ENCODE measurements at regions of chr20 and their contacts with region 1.

Region 1: GRCh38 chr20:45095753-45096371 is 5.1 kb downstream of the KCNS1 start:
- DNase-seq: peak; percentile 55
- ATAC-seq: peak; percentile 76
- H3K4me3 ChIP-seq: no peak overlapping the region
- H3K27ac ChIP-seq: no peak overlapping the region
- H3K4me1 ChIP-seq: no peaks in the 10 kb centered on the region
- H3K27me3 ChIP-seq: no peaks in the 10 kb centered on the region
- CTCF ChIP-seq: peak; percentile 92

Region 2: GRCh38 chr20:43650997-43651525 is 1444.8 kb before region 1 on chr20:
- CTCF ChIA-PET with region 1: no interaction called
- POLR2A ChIA-PET with region 1: no interaction called
- in situ Hi-C with region 1: no loop called
- intact Hi-C with region 1: no loop called
- DNase-seq: no peak
- ATAC-seq: no peak
- H3K4me3 ChIP-seq: no peak overlapping the region
- H3K27ac ChIP-seq: no peak overlapping the region
- H3K4me1 ChIP-seq: no peaks in the 10 kb centered on the region
- H3K27me3 ChIP-seq: no peaks in the 10 kb centered on the region
- CTCF ChIP-seq: no peak

Region 3: DNA sequence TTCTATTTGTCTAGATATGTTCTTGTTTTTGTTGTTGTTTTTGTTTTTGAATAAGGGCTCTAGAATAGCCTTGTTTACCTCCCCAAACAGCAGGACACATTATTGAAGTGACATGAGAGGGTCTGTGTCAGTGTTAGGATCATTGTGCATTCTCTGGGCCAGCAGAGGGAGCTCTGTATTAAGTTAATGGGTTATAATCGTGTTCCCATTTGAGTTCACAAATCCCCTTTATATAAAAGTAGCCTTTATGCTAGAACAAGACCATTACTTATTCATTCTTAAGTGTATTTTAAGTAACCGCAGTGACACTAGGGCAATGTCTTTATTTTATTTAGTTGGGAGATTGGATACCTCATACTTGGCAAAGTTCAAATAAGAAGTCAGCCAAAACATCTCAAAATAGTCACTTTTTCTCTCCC is 84.7 kb before region 1 on chr20:
- CTCF ChIA-PET with region 1: interaction called, 19 read pairs
- POLR2A ChIA-PET with region 1: no interaction called
- in situ Hi-C with region 1: no loop called
- intact Hi-C with region 1: loop called (anchors 10 kb)
- DNase-seq: peak; percentile 38
- ATAC-seq: peak; percentile 92
- H3K4me3 ChIP-seq: no peak overlapping the region
- H3K27ac ChIP-seq: no peak overlapping the region
- H3K4me1 ChIP-seq: 0 out of 2 replicates have a peak, but pooled peaks cover 3% of the 10 kb centered on the region
- H3K27me3 ChIP-seq: no peaks in the 10 kb centered on the region
- CTCF ChIP-seq: peak; percentile 79; the same call in 1 of the 2 replicates

Region 4: GRCh38 chr20:45044084-45044573 is 51.7 kb before region 1 on chr20:
- CTCF ChIA-PET with region 1: interaction called, 16 read pairs
- POLR2A ChIA-PET with region 1: no interaction called
- in situ Hi-C with region 1: no loop called
- intact Hi-C with region 1: loop called (anchors 2 kb)
- DNase-seq: peak; percentile 47
- ATAC-seq: peak; percentile 86
- H3K4me3 ChIP-seq: no peak overlapping the region
- H3K27ac ChIP-seq: peak overlapping the region; percentile 63
- H3K4me1 ChIP-seq: peaks cover 16% of the 10 kb centered on the region
- H3K27me3 ChIP-seq: no peaks in the 10 kb centered on the region
- CTCF ChIP-seq: peak; percentile 86

Region 5: GRCh38 chr20:45235995-45236394 is 140.1 kb after region 1 on chr20:
- CTCF ChIA-PET with region 1: no interaction called
- POLR2A ChIA-PET with region 1: no interaction called
- in situ Hi-C with region 1: no loop called
- intact Hi-C with region 1: no loop called
- DNase-seq: no peak
- ATAC-seq: no peak
- H3K4me3 ChIP-seq: no peak overlapping the region
- H3K27ac ChIP-seq: no peak overlapping the region
- H3K4me1 ChIP-seq: no peaks in the 10 kb centered on the region
- H3K27me3 ChIP-seq: peaks cover 7% of the 10 kb centered on the region
- CTCF ChIP-seq: peak; percentile 67

Region 6: DNA sequence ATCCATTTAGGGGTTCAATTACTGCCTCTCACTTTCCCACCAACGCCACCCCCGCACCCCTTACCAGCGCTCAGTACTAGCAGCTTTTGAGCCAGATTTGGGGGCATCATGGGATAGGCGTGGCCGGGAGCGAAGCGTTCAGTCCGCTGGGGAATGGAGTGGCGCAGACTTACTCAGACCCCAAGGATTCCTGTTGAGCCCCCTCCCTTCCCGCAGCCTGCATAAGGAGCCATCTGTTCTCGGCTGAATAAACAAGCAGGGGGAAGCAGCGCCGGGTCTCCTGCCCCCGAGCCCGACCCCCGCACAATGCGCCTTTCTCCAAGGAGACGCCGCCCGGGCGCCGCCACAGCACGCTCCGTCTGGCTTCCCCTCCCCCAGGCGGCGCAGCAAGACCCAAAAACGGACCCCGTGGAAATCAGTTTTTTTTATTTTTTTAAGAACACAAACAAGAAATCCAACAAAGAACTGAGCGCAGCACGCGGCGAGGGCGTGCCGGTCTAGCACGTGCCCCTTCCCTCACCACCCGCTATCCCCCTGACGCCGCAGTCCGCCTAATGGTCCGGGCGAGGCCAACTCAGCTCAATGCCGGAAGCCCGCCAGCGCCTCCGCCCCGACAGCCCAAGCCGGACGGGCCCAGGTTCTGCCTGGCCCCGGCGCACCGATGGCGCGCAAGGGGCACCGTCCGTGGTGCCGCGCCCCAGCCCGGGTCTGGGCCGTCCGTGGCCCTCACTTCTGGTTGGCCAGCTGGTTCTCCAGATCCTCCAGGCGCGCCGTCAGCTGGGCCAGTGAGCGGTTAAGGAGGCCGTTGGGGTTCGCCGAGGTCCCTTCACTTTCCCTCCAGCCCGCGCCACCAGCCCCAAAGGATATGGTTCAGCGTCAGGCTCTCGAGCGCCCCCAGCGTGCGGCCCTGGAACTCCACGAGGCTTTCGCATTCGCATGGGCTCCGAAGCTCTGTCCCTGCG is 197.5 kb after region 1 on chr20:
- CTCF ChIA-PET with region 1: interaction called, 8 read pairs
- POLR2A ChIA-PET with region 1: interaction called, 5 read pairs
- in situ Hi-C with region 1: no loop called
- intact Hi-C with region 1: loop called (anchors 10 kb)
- DNase-seq: peak; percentile 52
- ATAC-seq: peak; percentile 92
- H3K4me3 ChIP-seq: peak overlapping the region; percentile 57 to 66
- H3K27ac ChIP-seq: peak overlapping the region; percentile 52
- H3K4me1 ChIP-seq: no peaks in the 10 kb centered on the region
- H3K27me3 ChIP-seq: peaks cover 2% of the 10 kb centered on the region; the same call in 1 of the 2 replicates
- CTCF ChIP-seq: peak; percentile 99

Measured in Panc1 (cell line).